ENCODE measurements at regions of chr4 and their contacts with region 1.

Region 1: DNA sequence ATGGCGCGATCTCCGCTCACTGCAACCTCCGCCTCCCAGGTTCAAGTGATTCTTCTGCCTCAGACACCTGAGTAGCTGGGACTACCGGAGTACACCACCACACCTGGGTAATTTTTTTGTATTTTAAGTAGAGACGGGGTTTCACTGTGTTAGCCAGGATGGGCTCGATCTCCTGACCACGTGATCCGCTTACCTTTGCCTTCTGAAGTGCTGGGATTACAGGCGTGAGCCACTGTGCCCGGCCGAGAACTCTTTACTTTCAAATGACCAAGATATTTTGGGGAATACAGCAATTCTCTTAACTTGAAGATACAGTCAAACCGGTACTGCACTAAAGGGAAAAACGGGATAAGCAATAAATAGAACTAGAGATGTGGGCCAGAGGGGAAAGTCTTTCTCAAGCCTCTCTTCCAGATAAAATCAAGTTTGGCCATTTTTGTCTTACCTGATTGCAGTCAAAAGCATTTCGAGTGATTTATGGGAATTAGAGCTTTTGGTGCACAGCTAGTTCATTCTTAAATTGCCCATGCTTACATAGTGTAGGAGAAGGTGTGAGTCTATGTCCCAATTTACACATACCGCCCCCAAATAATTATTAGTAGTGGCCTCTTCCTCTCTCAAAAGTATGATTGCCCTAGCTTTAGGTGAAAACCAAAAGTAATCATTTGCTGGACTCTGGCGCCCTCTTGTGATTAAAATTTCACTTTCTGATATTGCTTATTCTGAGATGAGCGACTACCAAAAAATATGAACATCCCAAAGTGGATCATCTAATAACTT is 53.2 kb upstream of the ABCG2 start:
- DNase-seq: peak; percentile 68
- H3K4me3 Mint-ChIP-seq: no peak overlapping the region
- H3K27ac Mint-ChIP-seq: no peak overlapping the region
- H3K4me1 Mint-ChIP-seq: no peaks in the 10 kb centered on the region
- H3K27me3 Mint-ChIP-seq: peaks cover 21% of the 10 kb centered on the region
- CTCF ChIP-seq: peak; percentile 73

Region 2: DNA sequence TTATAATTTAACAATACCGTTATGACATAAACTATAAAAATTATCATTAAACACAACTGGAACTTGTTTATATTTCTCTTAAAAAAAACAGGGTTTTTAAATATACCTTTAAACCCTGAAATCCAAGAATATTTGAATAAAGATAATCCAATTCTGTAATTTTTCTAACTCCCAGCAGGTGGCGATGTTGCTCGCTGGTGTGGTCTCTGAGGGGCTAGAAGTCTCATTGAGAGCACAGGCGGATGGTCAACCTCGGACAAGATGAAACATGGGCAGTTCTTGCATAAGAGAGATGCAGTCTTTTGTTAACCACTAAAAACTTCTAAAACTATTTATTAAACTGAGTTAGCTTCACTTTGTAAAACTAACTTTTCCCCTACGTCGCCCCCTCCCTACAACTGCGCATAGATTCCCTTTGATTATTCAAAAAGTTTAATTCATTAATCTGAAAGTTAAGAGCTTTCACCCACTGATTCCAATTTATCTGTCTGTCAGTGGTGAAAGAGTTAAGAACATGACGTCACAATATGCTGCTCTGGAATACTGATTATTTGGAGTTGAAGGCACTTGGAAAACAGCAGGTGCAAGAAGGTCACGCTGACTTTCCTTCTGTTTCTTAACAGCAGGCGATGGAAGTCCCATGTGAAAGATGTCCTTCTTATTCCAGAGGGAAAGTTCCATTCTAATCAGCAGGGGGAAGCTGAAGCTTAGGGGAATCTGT is 532.1 kb before region 1 on chr4:
- CTCF ChIA-PET with region 1: interaction called, 4 read pairs
- POLR2A ChIA-PET with region 1: no interaction called
- intact Hi-C with region 1: loop called (anchors 5 kb)
- DNase-seq: peak; percentile 65
- H3K4me3 Mint-ChIP-seq: no peak overlapping the region
- H3K27ac Mint-ChIP-seq: no peak overlapping the region
- H3K4me1 Mint-ChIP-seq: no peaks in the 10 kb centered on the region
- H3K27me3 Mint-ChIP-seq: no peaks in the 10 kb centered on the region
- CTCF ChIP-seq: peak; percentile 76

Region 3: DNA sequence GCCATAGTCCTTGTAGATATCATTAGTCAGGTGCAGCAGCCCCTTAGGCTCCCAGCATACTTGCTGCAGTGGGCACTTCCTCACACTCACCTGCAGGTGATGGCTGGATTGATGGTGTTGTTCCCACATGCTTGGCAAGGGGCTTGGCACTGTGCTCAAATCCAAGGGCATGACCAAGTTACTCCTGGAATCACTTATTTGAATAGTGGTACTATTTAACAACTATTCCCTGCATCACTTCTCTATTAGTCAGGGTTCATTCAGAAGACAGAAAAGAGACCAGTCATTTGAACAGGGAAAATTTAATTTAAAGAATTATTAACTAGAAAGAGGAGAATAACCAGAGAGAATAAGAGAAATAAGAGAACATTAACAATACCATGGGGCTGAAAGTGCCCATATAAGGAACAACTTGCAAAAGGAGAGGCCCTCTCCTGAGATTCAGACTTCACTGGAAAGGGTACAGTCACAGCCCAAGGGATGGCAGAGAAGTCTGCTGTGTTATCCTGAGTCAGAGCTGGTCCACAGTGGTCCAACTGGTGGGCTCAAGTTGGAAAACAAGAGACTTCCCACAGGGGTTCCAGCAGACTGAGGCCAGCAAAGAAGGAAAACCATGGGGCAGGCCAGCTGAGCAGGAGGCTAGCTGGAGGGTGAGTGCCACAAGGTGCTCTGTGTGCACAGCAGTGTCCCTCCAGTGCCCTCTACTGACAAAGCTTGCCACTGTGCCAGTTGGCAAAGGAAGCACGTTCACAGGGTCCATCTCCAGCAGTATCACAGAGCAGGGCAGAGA is 226.4 kb before region 1 on chr4:
- CTCF ChIA-PET with region 1: interaction called, 5 read pairs
- POLR2A ChIA-PET with region 1: no interaction called
- intact Hi-C with region 1: loop called (anchors 2 kb)
- DNase-seq: peak; percentile 74
- H3K4me3 Mint-ChIP-seq: no peak overlapping the region
- H3K27ac Mint-ChIP-seq: no peak overlapping the region
- H3K4me1 Mint-ChIP-seq: peaks cover 5% of the 10 kb centered on the region
- H3K27me3 Mint-ChIP-seq: no peaks in the 10 kb centered on the region
- CTCF ChIP-seq: peak; percentile 69

Region 4: DNA sequence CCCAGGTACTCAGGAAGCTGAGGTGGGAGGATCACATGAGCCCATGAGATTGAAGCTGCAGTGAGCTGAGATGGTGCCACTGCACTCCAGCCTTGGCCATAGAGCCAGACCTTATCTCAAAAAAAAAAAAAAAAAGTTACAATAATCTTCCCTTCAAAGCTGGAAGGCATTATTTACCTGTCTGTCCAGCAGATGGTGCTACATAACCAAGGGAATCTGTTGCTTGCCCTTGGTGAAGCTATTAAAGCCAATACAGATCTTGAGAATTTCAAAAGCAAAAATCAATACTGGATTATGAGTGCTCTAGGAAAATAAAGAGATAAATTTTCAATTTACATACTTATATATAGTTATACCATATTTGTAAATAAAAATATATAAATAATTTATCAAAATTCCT is 178.4 kb before region 1 on chr4:
- CTCF ChIA-PET with region 1: interaction called, 100 read pairs
- POLR2A ChIA-PET with region 1: interaction called, 10 read pairs
- intact Hi-C with region 1: loop called (anchors 1 kb)
- DNase-seq: peak; percentile 77
- H3K4me3 Mint-ChIP-seq: no peak overlapping the region
- H3K27ac Mint-ChIP-seq: no peak overlapping the region
- H3K4me1 Mint-ChIP-seq: peaks cover 10% of the 10 kb centered on the region
- H3K27me3 Mint-ChIP-seq: no peaks in the 10 kb centered on the region
- CTCF ChIP-seq: peak; percentile 69

Region 5: DNA sequence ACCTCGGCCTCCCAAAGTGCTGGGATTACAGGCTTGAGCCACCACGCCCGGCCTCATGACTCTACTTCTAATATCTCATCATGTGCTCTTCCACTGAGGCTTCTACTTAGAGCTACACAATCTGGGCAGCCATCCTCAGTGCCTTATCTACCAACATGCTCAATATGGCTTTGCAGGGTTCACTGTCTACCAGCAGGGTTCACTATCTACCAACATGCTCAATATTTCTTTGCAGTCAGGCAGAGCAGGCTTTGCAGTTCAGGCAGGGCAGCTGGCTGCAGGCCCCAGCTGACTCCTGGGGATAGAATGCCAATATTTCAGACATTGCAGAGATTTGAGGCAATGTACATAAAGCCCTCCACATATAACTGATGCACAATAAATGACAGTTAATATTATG is 156.8 kb before region 1 on chr4:
- CTCF ChIA-PET with region 1: interaction called, 22 read pairs
- POLR2A ChIA-PET with region 1: interaction called, 4 read pairs
- intact Hi-C with region 1: loop called (anchors 1 kb)
- DNase-seq: peak; percentile 40
- H3K4me3 Mint-ChIP-seq: no peak overlapping the region
- H3K27ac Mint-ChIP-seq: no peak overlapping the region
- H3K4me1 Mint-ChIP-seq: no peaks in the 10 kb centered on the region
- H3K27me3 Mint-ChIP-seq: no peaks in the 10 kb centered on the region
- CTCF ChIP-seq: peak; percentile 31

Region 6: DNA sequence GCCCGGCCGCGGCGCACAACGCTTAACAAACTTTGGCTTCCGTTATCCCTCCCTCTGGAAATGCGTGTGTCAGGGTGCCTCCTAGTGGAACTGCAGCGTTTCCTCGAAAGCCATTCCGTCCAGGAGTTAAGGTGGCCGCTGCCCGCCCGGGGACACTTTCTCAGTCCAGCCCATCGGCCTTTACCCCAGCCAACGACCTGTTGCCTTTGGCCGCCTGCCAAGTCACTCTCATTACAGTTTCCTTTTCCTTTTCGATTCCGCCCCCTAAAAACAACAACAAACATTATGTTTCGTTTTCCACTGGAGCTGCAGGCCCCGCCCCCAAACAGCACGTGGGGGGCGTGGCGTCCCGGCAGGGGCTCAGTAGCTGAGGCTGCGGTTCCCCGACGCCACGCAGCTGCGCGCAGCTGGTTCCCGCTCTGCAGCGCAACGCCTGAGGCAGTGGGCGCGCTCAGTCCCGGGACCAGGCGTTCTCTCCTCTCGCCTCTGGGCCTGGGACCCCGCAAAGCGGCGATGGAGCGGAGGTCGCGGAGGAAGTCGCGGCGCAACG is 245.2 kb after region 1 on chr4 and contains the start of gene HERC5:
- CTCF ChIA-PET with region 1: interaction called, 11 read pairs
- POLR2A ChIA-PET with region 1: no interaction called
- intact Hi-C with region 1: no loop called
- DNase-seq: peak; percentile 95
- H3K4me3 Mint-ChIP-seq: peak within 1 kb of the TSS; percentile 95
- H3K27ac Mint-ChIP-seq: peak within 1 kb of the TSS; percentile 57
- H3K4me1 Mint-ChIP-seq: no peaks in the 10 kb centered on the region
- H3K27me3 Mint-ChIP-seq: no peaks in the 10 kb centered on the region
- CTCF ChIP-seq: peak; percentile 62
- total RNA-seq, gene HERC5: 0.54 and 0.63 TPM in 2 replicates